Right ventricle myocardium superior (tissue), 1 donor: ENCODE measurements at regions of chr19 and their contacts with region 1.

Region 1: GRCh38 chr19:18203863-18204393 is at the start of gene RAB3A:
- DNase-seq: peak; percentile 100
- ATAC-seq: peak; percentile 94
- total RNA-seq, gene RAB3A: 26.7 TPM

Region 2: DNA sequence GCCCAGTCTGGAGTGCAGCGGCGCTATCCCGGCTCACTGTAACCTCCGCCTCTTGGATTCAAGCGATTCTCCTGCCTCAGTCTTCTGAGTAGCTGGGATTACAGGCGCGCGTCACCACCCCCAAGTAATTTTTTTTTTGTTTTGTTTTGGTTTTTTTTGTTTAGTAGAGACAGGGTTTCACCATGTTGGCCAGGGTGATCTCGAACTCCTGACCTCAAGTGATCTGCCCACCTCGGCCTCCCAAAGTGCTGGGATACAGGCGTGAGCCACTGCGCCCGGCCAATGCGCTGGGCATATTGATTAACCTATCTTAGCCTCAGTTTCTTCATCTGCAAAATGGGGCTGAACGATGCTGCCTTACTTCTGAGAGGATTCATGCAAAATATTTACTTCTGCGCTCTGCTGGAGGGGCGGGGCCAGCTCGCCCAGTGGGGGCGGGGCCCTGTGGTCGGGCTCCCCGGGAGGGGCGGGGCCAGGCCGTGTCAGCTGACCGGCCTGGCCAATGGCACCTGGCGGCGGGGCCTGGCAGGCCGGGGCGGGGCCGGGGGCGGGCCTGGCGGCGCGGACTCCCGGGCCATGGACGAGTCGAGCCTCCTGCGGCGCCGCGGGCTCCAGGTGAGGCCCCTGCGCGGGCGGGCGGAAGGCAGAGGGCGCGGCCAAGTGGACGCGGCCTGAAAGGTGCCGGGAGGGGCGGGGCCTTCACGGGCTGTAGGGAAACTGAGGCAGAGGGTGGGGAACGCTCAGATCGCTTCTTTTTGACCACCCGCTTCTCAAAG is 106.5 kb before region 1 on chr19 and contains the start of gene MAST3:
- intact Hi-C with region 1: no loop called
- DNase-seq: peak; percentile 90
- ATAC-seq: peak; percentile 97
- total RNA-seq, gene MAST3: 4.9 TPM

Region 3: GRCh38 chr19:18128044-18128443 is 75.9 kb before region 1 on chr19:
- intact Hi-C with region 1: no loop called
- DNase-seq: no peak
- ATAC-seq: no peak

Region 4: GRCh38 chr19:18251587-18252369 is 47.9 kb after region 1 on chr19:
- intact Hi-C with region 1: loop called (anchors 2 kb)
- DNase-seq: peak; percentile 76
- ATAC-seq: peak; percentile 80

Region 5: DNA sequence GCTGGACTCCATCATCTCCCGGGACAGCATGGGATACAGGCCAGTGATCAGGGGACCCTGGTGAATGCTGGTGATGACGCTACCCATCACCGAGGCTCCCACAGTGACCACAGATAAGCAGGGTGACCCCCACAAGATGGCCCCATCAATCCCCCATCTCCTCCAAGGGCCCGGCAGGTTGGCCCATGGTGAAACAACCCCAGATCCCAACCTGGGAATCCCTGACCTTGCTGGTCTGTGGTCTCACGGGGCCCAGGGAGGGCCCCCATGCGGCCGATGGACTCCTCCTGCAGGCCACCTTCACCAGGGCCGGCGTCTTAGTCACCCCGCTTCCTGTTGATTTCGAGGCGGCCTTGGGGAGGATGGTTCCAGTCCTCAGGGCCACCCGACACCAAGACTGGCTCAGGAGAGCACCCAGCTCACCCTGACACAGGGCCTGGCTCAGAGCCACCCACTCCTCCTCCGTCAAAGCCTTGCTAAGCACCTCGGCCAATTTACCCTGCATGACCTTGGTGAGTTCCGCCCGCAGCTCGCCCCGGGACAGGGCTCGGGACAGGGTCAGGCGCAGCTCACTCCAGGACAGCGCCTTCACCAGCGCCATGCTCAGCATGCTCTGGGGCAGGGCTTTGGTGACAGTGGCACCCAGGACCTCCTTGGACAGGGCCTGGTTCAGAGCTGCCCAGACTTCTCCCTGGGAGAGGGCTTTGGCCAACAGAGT is 60.4 kb after region 1 on chr19:
- intact Hi-C with region 1: no loop called
- DNase-seq: no peak
- ATAC-seq: peak; percentile 26

Region 6: DNA sequence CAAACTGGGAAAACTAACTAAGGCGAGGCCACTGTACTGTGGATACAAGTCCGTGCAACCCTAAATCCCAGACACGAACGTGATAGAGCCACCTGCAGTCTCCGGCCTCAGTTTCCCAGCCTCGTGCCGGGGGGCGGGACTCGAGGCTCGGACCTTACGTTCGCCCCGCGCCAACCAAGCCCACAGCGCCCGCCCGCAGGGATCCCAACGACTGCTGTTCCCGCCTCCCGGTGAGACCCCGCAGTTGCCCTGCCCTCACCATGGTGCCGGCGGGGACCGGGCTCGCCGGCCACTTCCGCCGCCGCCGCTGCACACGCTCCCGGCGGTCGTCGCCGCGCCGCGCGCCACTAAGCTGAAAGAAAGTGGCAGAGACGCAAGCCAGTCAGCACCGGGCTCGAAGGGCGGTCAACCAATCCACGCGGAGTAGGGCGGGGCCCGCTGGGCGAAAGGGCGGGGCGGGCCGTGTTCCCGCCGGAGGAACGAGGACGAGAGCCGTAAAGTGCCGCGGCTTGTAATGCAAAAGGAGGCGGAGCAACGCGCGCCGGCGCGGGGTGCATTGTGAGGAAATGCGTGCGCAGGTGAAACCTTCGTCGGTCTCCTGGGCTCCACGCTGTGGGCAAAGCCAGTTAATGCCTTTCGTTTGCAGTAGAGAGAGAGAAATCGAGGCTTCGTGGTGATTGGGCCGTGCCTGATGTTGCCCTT is 119.0 kb after region 1 on chr19 and contains the start of gene LSM4:
- intact Hi-C with region 1: loop called (anchors 10 kb)
- DNase-seq: peak; percentile 99
- ATAC-seq: peak; percentile 97
- total RNA-seq, gene LSM4: 103 TPM

Region 7: DNA sequence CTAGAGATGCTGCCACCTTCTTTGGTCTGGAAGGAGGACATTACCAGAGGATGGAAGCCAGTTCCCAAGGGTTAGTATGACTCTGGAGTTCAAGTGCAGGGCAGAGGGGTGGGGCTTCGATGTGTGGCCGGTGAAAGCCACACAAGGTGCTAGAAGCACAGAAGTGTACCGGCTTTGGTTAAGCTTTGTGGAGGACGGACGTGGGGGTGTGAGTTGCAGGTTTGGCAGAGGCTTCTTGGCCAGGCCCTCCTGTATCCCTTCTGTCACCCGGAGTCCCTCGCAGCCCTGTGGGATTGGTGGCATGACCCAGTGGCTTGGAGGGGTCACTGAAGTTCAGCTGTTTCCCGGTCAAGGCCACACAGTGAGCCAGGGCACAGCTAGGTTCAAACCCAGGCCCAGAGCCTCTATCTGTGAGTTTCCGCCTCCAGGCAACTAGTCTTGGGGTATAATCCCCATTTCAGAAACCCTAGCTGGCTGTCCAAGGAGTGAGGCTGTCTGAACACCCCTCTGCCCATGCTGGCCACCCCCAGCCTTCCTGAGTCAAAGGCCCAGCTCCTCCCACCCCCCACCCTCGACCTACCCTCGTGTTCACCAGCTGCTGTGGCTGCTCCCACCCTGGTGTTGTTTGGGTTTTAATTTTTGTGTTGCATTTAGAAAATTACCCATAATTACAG is 210.7 kb after region 1 on chr19:
- intact Hi-C with region 1: loop called (anchors 5 kb)
- DNase-seq: peak; percentile 60
- ATAC-seq: no peak

Region 8: GRCh38 chr19:18521885-18522624 is 318.1 kb after region 1 on chr19 and contains the start of gene ELL:
- intact Hi-C with region 1: no loop called
- DNase-seq: peak; percentile 100
- ATAC-seq: peak; percentile 93
- total RNA-seq, gene ELL: 7.5 TPM